Endothelial cell of umbilical vein (primary cell): ENCODE measurements at regions of chr4 and their contacts with region 1.

Region 1: DNA sequence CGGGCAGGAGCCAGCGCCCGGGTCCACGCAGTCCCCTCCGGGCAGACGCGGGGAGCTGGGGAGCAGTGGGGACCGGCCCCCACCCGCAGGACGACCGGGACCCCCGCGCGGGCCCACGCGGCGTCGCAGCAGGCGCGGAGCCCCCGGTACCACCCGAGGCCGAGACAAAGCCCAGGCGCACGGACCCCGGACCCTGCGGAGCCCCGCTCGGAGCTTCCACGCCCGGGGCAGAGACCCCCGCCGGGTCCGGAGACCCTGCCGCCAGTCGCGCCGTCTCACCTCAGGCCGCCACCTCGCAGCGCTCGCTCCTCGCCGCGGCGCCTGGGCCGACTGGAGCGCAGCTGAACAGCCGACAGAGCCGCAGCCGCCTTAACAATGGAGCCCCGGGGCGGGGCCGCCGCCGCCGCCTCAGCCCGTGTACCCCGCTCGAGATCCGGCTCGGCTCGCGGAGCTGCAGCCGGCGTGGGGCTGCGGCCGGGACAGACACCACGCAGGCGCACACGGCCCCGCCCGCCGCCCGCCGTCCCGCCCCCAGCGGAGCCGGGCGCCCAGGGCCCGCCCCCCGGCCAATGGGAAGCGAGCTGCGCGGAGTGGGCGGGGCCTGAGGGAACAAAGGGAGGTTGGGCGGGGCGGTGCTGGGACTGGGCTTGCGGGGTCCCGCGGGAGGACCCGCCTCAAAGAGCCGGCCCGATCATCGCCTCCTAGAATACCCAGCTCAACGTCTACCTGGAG is at the start of gene AFAP1:
- DNase-seq: peak; percentile 93
- H3K4me3 ChIP-seq: peak within 1 kb of the TSS; percentile 47 to 93 (median 88)
- H3K27ac ChIP-seq: peak within 1 kb of the TSS; percentile 80
- H3K4me1 ChIP-seq: peaks cover 31% of the 10 kb centered on the region
- H3K27me3 ChIP-seq: no peaks in the 10 kb centered on the region
- CTCF ChIP-seq: no peak
- POLR2A ChIP-seq: peak; percentile 93
- total RNA-seq, gene AFAP1: 93.3 and 103 TPM in 2 replicates

Region 2: DNA sequence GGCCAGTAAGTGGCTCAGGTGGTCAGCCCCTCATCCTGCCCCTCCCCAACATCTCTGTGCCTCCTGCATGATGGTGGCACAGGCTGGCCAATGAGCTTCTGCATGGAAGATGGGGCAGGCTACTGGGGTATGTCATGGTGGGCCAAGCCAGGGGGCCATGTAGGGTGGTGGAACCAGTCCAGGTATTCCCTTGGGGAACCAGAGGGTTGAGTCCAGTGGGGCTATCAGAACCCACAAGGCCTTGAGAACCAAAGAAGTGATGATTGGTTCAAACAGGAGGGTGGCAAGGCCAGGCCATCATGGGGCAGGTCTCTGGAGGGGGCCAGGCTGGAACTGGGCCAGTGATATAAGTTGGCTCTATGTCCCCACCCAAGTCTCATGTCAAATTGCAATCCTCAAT is 1448.3 kb before region 1 on chr4:
- CTCF ChIA-PET with region 1: no interaction called
- POLR2A ChIA-PET with region 1: no interaction called
- dilution Hi-C with region 1: no loop called
- intact Hi-C with region 1: no loop called
- DNase-seq: no peak
- H3K4me3 ChIP-seq: no peak overlapping the region
- H3K27ac ChIP-seq: no peak overlapping the region
- H3K4me1 ChIP-seq: no peaks in the 10 kb centered on the region
- H3K27me3 ChIP-seq: peaks cover 0 to 3% of the 10 kb centered on the region in 2 experiments
- CTCF ChIP-seq: no peak
- POLR2A ChIP-seq: no peak

Region 3: DNA sequence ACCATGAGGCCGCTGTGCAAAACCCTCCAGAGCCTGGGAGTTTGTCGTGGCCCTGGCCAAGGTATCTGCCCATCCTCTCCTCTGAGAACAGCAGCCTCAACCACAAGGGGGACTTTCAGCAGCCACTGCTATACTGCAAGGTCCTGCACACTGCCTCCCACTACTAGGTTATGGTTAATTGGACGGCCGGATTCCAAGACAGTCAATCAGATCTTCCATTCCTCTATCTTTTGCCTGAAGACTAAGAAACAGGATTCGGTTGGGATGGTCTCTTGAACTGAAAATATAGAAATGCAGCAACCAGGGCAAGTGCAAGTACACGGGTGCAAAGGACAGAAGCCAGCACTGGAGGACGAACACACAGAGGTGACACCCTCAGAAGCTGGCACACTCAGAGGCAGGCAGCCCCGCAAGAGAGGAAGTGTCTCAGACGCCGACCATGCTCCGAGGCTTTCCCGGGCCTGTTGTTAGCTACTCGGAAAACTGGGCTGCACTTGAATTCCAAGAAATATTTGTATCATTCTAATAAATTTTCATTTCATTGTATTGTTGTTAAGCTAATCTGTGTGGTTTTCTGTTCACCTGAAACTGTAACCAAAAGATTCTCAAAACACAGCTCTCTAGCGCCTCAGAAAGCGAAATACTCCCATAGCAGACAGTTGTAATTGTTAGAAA is 63.2 kb before region 1 on chr4:
- CTCF ChIA-PET with region 1: interaction called, 15 read pairs
- POLR2A ChIA-PET with region 1: interaction called, 5 read pairs
- dilution Hi-C with region 1: no loop called
- intact Hi-C with region 1: loop called (anchors 2 kb)
- DNase-seq: peak; percentile 75
- H3K4me3 ChIP-seq: no peak overlapping the region
- H3K27ac ChIP-seq: peak overlapping the region; percentile 30
- H3K4me1 ChIP-seq: peaks cover 55% of the 10 kb centered on the region
- H3K27me3 ChIP-seq: no peaks in the 10 kb centered on the region
- CTCF ChIP-seq: peak; percentile 44 to 57
- POLR2A ChIP-seq: peak; percentile 34

Region 4: GRCh38 chr4:7904952-7905915 is 34.3 kb before region 1 on chr4:
- CTCF ChIA-PET with region 1: interaction called, 6 read pairs
- POLR2A ChIA-PET with region 1: interaction called, 8 read pairs
- dilution Hi-C with region 1: no loop called
- intact Hi-C with region 1: loop called (anchors 1 kb)
- DNase-seq: no peak
- H3K4me3 ChIP-seq: no peak overlapping the region
- H3K27ac ChIP-seq: peak overlapping the region; percentile 75
- H3K4me1 ChIP-seq: peaks cover 94% of the 10 kb centered on the region
- H3K27me3 ChIP-seq: no peaks in the 10 kb centered on the region
- CTCF ChIP-seq: no peak
- POLR2A ChIP-seq: no peak

Region 5: GRCh38 chr4:7929118-7929951 is 10.2 kb before region 1 on chr4:
- CTCF ChIA-PET with region 1: interaction called, 53 read pairs
- POLR2A ChIA-PET with region 1: interaction called, 6 read pairs
- dilution Hi-C with region 1: no loop called
- intact Hi-C with region 1: no loop called
- DNase-seq: no peak
- H3K4me3 ChIP-seq: no peak overlapping the region
- H3K27ac ChIP-seq: no peak overlapping the region
- H3K4me1 ChIP-seq: peaks cover 38% of the 10 kb centered on the region
- H3K27me3 ChIP-seq: no peaks in the 10 kb centered on the region
- CTCF ChIP-seq: peak in 1 of 2 donors; percentile 12
- POLR2A ChIP-seq: no peak

Region 6: GRCh38 chr4:7960790-7961655 is 21.5 kb after region 1 on chr4:
- CTCF ChIA-PET with region 1: interaction called, 17 read pairs
- POLR2A ChIA-PET with region 1: interaction called, 18 read pairs
- dilution Hi-C with region 1: no loop called
- intact Hi-C with region 1: loop called (anchors 1 kb)
- DNase-seq: peak; percentile 96
- H3K4me3 ChIP-seq: no peak overlapping the region
- H3K27ac ChIP-seq: peak overlapping the region; percentile 41
- H3K4me1 ChIP-seq: peaks cover 32% of the 10 kb centered on the region
- H3K27me3 ChIP-seq: no peaks in the 10 kb centered on the region
- CTCF ChIP-seq: no peak
- POLR2A ChIP-seq: peak; percentile 38

Region 7: GRCh38 chr4:7967501-7968261 is 28.1 kb after region 1 on chr4:
- CTCF ChIA-PET with region 1: interaction called, 10 read pairs
- POLR2A ChIA-PET with region 1: interaction called, 7 read pairs
- dilution Hi-C with region 1: no loop called
- intact Hi-C with region 1: loop called (anchors 1 kb)
- DNase-seq: peak; percentile 74
- H3K4me3 ChIP-seq: no peak overlapping the region
- H3K27ac ChIP-seq: peak overlapping the region; percentile 89
- H3K4me1 ChIP-seq: peaks cover 48% of the 10 kb centered on the region
- H3K27me3 ChIP-seq: no peaks in the 10 kb centered on the region
- CTCF ChIP-seq: no peak
- POLR2A ChIP-seq: no peak